ENCODE measurements at regions of chr9 and their contacts with region 1.

Region 1: DNA sequence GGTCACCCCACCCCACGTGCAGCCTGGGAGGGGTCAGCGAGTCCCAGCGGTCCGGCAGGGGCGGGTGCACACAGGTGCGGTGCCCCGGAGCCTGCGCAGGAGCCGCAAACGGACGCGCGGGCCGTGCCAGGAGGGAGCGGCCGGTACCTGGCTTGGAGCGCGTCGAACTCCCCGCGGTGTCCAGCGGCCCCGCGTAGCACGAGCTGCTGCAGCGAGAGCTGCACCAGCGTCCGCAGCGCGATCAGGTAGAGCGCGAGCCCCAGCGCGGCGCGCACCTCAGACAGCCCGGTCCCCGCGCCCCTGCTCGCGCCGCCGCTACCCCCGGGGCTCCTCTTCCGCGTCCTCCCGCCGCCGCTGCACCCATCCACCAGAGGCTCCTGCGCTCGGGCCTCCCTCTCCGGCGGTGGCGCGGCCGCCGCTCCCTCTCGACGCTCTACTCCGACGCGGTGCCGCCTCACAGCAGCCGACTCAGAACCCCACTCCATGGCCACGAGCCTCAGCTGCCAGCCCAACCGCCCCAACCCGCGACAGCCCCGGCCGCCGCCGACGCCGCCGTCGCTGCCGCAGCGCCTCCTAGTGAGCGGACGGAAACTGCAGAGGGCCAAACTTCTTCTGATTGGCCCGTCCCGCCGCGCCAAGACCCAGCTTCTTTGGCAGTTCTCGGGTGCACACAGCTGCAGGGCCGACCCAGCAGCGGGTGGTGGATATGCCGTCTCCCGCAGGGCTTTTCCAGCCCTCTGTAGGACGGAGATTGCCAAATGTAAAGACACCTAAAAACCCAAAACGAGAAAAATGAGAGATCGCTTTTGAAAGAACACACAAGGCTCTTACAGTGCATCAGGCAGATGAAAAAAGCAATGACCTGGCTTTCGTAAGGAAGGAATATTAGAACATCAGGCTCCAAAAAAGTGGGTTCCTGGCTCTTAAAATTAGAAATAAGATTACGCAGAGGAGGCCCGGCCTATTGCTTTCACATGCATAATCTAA is at the start of gene ERMP1:
- DNase-seq: peak; percentile 92
- H3K4me3 ChIP-seq: peak within 1 kb of the TSS; percentile 76 to 89
- H3K27ac ChIP-seq: peak within 1 kb of the TSS in 1 of 2 experiments; percentile 41; a peak in 1 of 4 replicates
- H3K4me1 ChIP-seq: peaks cover 0 to 9% of the 10 kb centered on the region in 2 experiments; a peak in 3 of 4 replicates
- H3K27me3 ChIP-seq: no peaks in the 10 kb centered on the region
- CTCF ChIP-seq: peak; percentile 85
- EP300 ChIP-seq: peak in 1 of 2 experiments; percentile 72; a peak in 1 of 4 replicates
- RAD21 ChIP-seq: peak; percentile 48
- polyA plus RNA-seq, gene ERMP1: 5.9 and 6.4 TPM in 2 replicates

Region 2: GRCh38 chr9:5817869-5818268 is 15.0 kb before region 1 on chr9:
- CTCF ChIA-PET with region 1: interaction called, 16 read pairs
- POLR2A ChIA-PET with region 1: no interaction called
- DNase-seq: no peak
- H3K4me3 ChIP-seq: no peak overlapping the region
- H3K27ac ChIP-seq: peak overlapping the region in 1 of 2 experiments; percentile 49; a peak in 2 of 4 replicates
- H3K4me1 ChIP-seq: peaks cover 0 to 5% of the 10 kb centered on the region in 2 experiments; a peak in 1 of 4 replicates
- H3K27me3 ChIP-seq: no peaks in the 10 kb centered on the region
- CTCF ChIP-seq: no peak
- EP300 ChIP-seq: peak in 1 of 2 experiments; percentile 61; a peak in 1 of 4 replicates
- RAD21 ChIP-seq: no peak

Region 3: DNA sequence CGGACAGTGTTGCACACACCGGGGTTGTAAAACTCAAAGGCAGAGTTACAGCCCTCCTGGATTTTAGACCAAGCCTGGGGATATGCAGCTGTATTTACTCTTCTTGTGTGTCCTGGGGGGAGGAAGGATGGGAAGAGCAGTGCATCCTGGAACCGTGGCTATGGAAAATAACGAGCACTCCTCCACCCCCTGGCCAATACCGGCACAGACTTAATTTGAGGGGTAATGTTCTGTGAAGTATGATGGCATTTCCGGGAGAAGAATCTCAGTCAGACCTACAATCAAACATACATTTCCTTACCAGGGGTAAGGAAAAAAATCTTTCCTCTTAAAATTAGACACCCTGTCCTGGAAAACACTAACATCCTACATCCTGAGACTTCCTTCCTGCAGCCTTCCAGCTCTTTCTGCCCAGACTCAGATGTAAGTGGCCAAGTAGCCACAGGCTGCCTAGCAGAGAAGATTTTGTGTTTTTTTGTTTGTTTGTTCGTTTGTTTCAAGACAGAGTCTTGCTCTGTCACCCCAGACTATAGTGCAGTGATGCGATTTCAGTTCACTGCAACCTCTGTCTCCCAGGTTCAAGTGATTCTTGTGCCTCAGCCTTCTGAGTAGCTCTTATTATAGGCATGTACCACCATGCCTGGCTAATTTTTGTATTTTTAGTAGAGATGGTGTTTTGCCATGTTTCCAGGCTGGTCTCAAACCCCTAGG is 11.1 kb after region 1 on chr9:
- CTCF ChIA-PET with region 1: interaction called, 24 read pairs
- POLR2A ChIA-PET with region 1: no interaction called
- DNase-seq: peak; percentile 26
- H3K4me3 ChIP-seq: no peak overlapping the region
- H3K27ac ChIP-seq: peak overlapping the region in 1 of 2 experiments; percentile 51; a peak in 1 of 4 replicates
- H3K4me1 ChIP-seq: peaks cover 7 to 9% of the 10 kb centered on the region in 2 experiments; a peak in 2 of 4 replicates
- H3K27me3 ChIP-seq: no peaks in the 10 kb centered on the region
- CTCF ChIP-seq: no peak
- EP300 ChIP-seq: no peak
- RAD21 ChIP-seq: no peak